ENCODE measurements at regions of chr13 and their contacts with region 1.

Region 1: DNA sequence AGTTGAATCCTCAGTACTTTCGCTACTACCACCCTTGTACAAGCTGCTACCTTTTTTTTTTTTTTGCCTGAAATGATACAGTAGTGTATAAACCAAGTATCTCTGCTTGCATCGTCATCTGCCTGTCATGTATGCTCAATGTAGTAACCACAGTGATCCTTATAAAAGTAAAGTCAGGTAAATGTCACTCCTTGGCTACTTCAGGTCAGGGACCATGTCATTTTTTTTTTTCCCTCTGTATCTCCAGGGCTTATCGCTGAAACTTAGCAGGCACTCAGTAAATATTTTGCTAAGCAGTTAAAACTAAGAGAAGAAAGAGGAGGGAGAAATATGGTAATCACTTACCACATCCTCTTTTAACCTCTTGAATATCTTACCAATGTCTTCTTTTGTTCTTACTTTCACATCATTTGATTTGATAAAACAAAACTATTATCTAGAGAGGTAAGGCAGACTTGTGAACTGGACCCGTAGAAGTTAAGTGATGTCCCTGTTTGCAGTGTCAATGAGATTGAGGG is 96.8 kb upstream of the KLF12 start:
- DNase-seq: no peak
- H3K4me3 Mint-ChIP-seq: peak overlapping the region; percentile 52
- H3K27ac Mint-ChIP-seq: peak overlapping the region; percentile 65
- H3K4me1 Mint-ChIP-seq: peaks cover 40% of the 10 kb centered on the region
- H3K27me3 Mint-ChIP-seq: no peaks in the 10 kb centered on the region

Region 2: DNA sequence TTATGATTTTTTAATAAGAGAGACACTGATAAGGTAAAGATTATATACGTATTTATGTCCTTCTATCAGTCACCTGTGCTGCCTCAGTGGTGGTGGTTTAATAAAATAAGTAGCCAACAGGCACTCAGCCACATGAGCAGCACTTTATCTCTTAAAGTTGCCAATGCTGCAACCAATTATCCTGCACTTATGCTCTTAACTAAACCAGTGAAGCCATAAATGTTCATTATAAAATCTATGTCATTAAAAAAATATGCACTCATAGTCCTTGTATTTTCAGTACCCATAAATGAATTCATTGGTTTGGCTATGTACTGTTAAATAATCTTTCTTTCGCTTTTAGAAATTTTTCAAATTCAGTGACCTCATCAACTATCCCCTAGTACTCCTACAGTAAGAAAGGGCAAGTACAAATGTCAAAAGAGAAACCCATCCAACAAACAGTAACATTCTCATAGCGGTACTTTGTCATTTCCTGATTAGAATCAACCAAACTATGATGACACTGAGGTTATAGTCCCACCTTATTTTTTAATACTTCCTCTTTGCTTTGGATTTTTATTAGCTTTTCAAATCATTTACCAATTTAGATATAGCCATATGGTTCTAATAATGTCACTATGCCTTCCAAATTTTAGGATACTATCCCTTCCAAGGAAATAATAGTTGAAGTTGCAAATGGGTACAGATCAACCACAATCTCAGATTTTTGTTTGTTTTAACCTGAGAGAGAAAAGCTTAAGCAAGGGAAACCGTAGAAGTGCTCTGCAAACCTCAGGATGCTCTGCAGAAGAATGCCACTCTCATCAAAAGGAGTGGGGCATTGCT is 287.7 kb before region 1 on chr13:
- CTCF ChIA-PET with region 1: no interaction called
- intact Hi-C with region 1: loop called (anchors 5 kb)
- DNase-seq: no peak
- H3K4me3 Mint-ChIP-seq: peak overlapping the region; percentile 33
- H3K27ac Mint-ChIP-seq: peak overlapping the region; percentile 74
- H3K4me1 Mint-ChIP-seq: peaks cover 74% of the 10 kb centered on the region
- H3K27me3 Mint-ChIP-seq: no peaks in the 10 kb centered on the region

Region 3: DNA sequence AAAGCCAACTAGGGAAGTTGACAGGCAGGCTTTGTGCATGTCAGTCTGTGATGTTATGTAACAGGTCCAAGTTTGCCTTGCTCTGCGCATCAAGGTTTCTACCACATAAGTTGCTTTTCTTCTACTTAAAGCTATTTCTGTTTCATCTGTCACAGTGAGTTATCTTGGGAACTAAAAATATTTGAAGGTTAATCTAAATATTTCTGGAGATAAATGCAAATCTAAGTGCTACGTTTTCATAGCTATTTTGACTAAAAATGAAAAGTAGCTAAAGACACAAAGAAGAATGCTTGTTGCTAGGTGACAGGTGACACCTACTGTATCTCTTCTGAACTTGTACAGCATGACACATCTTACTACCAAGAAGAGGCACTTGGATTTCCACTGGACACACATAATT is 232.4 kb before region 1 on chr13:
- CTCF ChIA-PET with region 1: no interaction called
- intact Hi-C with region 1: no loop called
- DNase-seq: no peak
- H3K4me3 Mint-ChIP-seq: no peak overlapping the region
- H3K27ac Mint-ChIP-seq: no peak overlapping the region
- H3K4me1 Mint-ChIP-seq: peaks cover 52% of the 10 kb centered on the region
- H3K27me3 Mint-ChIP-seq: no peaks in the 10 kb centered on the region

Region 4: DNA sequence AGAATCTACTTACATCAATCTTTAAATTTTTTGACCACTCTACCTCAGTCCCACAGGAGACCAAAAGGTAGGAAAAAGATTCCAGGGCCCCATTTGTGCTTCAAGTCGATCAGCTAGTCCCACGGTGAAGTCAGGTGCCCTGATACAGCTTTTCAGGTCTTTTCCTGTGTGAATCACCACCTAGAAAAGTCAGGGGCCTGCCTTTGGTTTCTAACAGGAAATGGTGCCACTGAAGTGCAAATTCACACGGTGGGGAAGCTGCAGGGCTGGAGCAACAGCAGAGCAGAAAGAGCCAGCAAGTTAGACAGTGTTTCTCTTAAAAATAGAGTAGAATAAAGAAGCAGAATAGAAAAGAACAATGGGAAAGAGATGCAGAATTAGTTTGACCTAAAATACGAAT is 204.3 kb before region 1 on chr13:
- CTCF ChIA-PET with region 1: no interaction called
- intact Hi-C with region 1: loop called (anchors 2 kb)
- DNase-seq: peak; percentile 86
- H3K4me3 Mint-ChIP-seq: peak overlapping the region; percentile 72
- H3K27ac Mint-ChIP-seq: peak overlapping the region; percentile 87
- H3K4me1 Mint-ChIP-seq: peaks cover 80% of the 10 kb centered on the region
- H3K27me3 Mint-ChIP-seq: no peaks in the 10 kb centered on the region

Region 5: DNA sequence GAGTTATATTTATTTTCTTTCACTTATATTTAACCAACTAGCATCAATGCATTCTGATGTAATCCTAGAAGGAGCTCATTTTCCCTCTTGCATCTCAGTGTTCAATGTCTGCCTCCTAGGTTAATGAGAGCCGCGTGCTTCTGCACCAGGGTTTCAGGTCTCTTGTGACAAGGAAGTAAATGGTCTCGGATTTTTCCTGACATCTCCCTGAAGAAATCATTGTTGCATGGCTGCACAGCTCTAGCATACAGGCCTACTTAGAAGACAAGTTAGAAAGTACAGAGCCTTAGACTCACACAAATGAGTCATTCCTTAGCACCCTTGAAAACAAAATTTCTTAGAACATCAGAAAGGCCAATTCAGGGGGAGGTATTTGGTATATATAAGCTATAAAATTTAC is 39.6 kb before region 1 on chr13:
- CTCF ChIA-PET with region 1: no interaction called
- intact Hi-C with region 1: loop called (anchors 2 kb)
- DNase-seq: no peak
- H3K4me3 Mint-ChIP-seq: no peak overlapping the region
- H3K27ac Mint-ChIP-seq: peak overlapping the region; percentile 50
- H3K4me1 Mint-ChIP-seq: peaks cover 38% of the 10 kb centered on the region
- H3K27me3 Mint-ChIP-seq: no peaks in the 10 kb centered on the region

Region 6: DNA sequence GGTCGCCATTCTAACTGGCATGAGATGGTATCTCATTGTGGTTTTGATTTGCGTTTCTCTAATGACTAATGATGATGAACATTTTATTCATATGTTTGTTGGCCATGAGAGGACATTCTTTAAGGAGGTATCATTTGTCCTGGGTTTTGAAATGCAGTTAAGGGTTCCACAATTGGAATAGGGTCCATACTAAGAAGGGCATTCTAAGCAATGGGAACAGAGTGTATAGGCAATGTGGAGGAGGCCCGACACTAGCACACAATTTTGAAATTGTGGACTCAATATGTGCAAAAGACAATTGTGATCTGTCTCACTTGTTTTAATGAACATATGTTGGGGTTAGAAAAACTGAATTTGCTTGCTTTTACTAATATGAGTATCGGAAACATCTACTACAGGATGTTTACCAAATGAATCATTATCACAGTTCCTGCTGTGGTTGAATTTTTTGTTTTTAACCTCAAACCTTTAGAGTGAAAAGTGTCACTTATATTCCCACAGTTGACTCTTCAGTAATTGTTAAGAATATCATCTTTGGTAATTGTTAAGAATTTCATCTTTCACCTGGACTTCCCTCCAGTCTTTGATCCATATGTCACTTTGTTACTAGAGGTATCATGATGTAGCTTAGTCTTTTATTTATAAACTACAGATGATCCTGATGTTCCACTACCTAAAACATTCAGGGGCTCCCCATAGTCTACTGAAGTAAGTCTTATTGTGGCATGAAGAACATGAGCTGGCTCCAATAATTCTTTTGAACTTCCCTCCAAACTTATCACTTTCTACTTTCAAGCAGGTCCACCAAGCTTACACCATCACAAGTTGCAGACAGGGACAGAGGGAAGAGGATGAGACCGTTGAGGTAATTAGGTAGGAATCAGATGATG is 12.8 kb after region 1 on chr13:
- CTCF ChIA-PET with region 1: interaction called, 5 read pairs
- intact Hi-C with region 1: loop called (anchors 1 kb)
- DNase-seq: no peak
- H3K4me3 Mint-ChIP-seq: peak overlapping the region; percentile 48
- H3K27ac Mint-ChIP-seq: peak overlapping the region; percentile 81
- H3K4me1 Mint-ChIP-seq: peaks cover 67% of the 10 kb centered on the region
- H3K27me3 Mint-ChIP-seq: no peaks in the 10 kb centered on the region

Region 7: DNA sequence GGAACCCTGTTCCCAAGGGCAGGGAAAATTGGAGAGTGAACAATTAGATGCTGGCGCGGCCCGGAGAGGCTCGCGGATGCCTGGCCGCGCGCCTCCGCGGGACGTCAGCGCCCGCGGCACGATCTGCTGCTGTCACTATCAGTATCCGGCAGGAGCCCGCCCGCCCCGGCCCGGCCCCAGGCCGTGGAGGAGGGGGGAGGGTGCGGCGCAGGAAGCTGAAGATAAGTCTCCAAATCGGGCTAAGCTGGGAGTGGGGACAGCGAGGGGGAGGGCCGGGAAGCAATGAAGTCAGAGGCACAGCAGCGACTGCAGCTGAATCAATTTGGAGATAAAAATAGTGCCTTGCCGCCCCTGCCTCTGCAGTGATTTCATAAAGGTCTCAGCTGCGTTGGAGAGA is 344.7 kb after region 1 on chr13:
- CTCF ChIA-PET with region 1: no interaction called
- intact Hi-C with region 1: no loop called
- DNase-seq: peak; percentile 77
- H3K4me3 Mint-ChIP-seq: peak overlapping the region; percentile 69
- H3K27ac Mint-ChIP-seq: no peak overlapping the region
- H3K4me1 Mint-ChIP-seq: peaks cover 10% of the 10 kb centered on the region
- H3K27me3 Mint-ChIP-seq: peaks cover 20% of the 10 kb centered on the region

Measured in activated naive CD4-positive, alpha-beta T cell treated with anti-CD3 and anti-CD28 coated beads for 36 hours (primary cell).